Activated CD4-positive, alpha-beta T cell treated with anti-CD3 and anti-CD28 coated beads, Interleukin-2, amount 10 ng/mL, durations not matched to agents 24 days and 14 days (primary cell): ENCODE measurements at regions of chr9 and their contacts with region 1.

Region 1: GRCh38 chr9:20437476-20437875 is 184.8 kb downstream of the MLLT3 start:
- DNase-seq: no peak
- H3K4me3 Mint-ChIP-seq: no peak overlapping the region
- H3K27ac Mint-ChIP-seq: no peak overlapping the region
- H3K4me1 Mint-ChIP-seq: peaks cover 30% of the 10 kb centered on the region
- H3K27me3 Mint-ChIP-seq: no peaks in the 10 kb centered on the region

Region 2: DNA sequence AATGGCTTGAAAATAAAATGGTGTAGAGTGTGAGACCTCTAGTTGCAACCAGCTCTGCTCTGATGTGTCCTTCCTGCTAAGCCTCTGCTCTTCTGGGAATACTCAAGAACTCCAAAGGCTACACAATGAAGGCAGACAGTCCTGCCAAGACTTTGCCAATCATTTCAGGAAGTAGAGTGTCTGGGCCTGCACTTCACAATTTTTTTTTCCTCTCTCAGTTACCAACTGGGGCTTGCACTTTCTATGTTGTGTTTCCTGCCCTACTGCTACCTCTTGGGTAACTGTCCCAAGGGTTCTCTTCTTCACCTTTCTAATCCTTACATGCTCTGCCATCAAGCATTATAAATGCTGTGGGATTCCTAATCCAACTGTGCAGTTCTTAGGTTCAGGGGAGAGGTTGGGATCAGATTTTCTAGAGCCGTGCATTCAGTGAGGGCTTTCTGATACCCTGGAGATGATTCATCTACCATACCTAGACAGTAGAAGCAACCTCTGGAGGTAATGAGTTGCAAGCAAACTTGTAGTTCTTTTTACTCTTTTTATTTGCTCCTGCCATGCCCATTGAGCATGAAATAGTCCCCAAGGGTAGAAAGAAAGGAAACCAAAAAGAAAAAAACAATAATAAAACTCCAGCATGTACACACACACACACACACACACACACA is 181.1 kb before region 1 on chr9:
- intact Hi-C with region 1: loop called (anchors 10 kb)
- DNase-seq: peak; percentile 67
- H3K4me3 Mint-ChIP-seq: no peak overlapping the region
- H3K27ac Mint-ChIP-seq: peak overlapping the region; percentile 4
- H3K4me1 Mint-ChIP-seq: peaks cover 21% of the 10 kb centered on the region
- H3K27me3 Mint-ChIP-seq: no peaks in the 10 kb centered on the region